GM10248 (cell line): ENCODE measurements at regions of chr13 and their contacts with region 1.

Region 1: GRCh38 chr13:75416327-75417005 is 65.5 kb downstream of the TBC1D4 start:
- DNase-seq: no peak
- CTCF ChIP-seq: peak; percentile 16

Region 2: GRCh38 chr13:74930402-74931165 is 485.9 kb before region 1 on chr13:
- CTCF ChIA-PET with region 1: no interaction called
- POLR2A ChIA-PET with region 1: no interaction called
- DNase-seq: no peak
- CTCF ChIP-seq: no peak

Region 3: GRCh38 chr13:75402787-75403186 is 13.7 kb before region 1 on chr13:
- CTCF ChIA-PET with region 1: interaction called, 29 read pairs
- POLR2A ChIA-PET with region 1: no interaction called
- DNase-seq: no peak
- CTCF ChIP-seq: no peak

Region 4: GRCh38 chr13:75530536-75530935 is 114.1 kb after region 1 on chr13:
- CTCF ChIA-PET with region 1: no interaction called
- POLR2A ChIA-PET with region 1: no interaction called
- DNase-seq: no peak
- CTCF ChIP-seq: no peak

Region 5: DNA sequence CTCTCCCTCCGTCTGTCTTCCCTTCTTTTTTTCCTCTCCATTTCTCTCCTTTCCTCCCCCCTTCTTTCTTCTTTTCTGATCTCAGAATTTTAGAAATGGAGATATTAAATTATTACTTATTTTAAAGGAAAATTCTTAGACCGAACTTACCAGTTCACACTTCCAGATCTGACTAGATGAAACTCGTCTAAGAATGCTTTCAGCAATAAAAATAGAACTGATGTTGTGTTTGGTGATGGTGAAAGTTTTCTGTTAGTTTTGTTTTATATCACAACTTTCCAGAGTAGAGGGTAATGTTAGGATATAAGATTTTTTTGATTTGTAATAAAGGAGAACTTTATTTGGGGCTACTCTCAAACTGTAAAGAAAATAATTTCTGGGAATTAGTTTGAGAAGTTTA is 163.1 kb after region 1 on chr13:
- CTCF ChIA-PET with region 1: no interaction called
- POLR2A ChIA-PET with region 1: no interaction called
- DNase-seq: no peak
- CTCF ChIP-seq: no peak

Region 6: DNA sequence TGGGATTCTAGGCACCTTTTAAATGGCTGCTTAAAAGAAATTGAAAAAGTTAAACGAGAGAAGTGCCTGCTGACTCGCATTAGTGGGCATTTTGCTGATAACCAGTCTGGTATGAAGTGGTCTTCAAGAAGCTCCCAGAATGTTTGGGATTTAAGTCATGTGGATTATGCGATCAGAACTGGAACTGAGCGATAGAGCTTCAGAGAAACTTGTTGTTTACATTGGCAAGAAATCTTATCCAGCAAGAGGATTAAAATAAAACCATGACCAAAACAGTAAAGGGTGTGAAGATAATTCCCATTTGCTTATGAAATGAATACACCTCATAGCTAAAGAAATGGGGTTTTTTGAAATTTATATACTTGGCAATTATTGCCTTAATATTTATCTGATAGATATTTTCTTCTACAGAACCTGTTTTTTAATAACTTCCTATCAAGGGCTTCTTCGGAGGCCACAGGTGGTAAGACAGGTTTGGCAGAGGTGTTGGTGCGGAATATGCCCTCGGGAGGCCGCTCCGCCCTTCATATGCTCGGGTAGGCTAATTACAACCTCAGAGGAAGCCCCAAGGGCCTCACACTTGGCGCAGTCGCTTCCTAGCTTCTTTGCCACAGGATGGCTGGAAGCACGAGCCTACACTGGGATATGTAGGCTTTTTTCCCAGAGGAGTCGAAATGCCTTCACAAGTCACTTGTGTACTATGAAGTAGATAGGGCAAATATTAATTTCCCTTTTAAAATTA is 288.3 kb after region 1 on chr13:
- CTCF ChIA-PET with region 1: no interaction called
- POLR2A ChIA-PET with region 1: no interaction called
- DNase-seq: no peak
- CTCF ChIP-seq: no peak